ENCODE measurements at regions of chr5 and their contacts with region 1.

Region 1: GRCh38 chr5:153308282-153308681 is 182.2 kb upstream of the GRIA1 start:
- DNase-seq: no peak
- ATAC-seq: no peak
- H3K4me3 ChIP-seq: no peak overlapping the region
- H3K4me3 Mint-ChIP-seq: no peak overlapping the region
- H3K27ac ChIP-seq: no peak overlapping the region
- H3K27ac Mint-ChIP-seq: no peak overlapping the region
- H3K4me1 ChIP-seq: no peaks in the 10 kb centered on the region
- H3K4me1 Mint-ChIP-seq: no peaks in the 10 kb centered on the region
- H3K27me3 ChIP-seq: no peaks in the 10 kb centered on the region
- H3K27me3 Mint-ChIP-seq: no peaks in the 10 kb centered on the region
- CTCF ChIP-seq: no peak

Region 2: DNA sequence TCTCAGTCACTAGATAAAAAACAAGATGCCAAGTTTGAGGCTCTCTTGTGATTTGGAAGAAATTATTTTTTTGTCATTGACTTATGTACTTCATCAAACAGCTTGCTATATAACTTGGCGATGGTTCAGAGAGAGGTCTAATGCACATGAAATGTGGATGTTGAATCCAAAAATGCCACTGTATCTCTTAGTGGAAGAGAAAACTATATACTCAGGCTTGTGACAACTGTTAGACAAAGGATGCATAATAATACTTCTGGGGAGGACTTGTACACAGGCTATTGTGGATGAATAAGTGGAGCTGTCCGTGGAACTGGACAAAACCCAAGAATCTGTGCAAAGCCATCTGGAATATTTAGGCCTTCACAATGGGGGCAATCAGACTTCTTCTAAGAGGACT is 740.3 kb before region 1 on chr5:
- CTCF ChIA-PET with region 1: no interaction called
- POLR2A ChIA-PET with region 1: no interaction called
- intact Hi-C with region 1: no loop called
- DNase-seq: no peak
- ATAC-seq: no peak
- H3K4me3 ChIP-seq: no peak overlapping the region
- H3K4me3 Mint-ChIP-seq: no peak overlapping the region
- H3K27ac ChIP-seq: no peak overlapping the region
- H3K27ac Mint-ChIP-seq: no peak overlapping the region
- H3K4me1 ChIP-seq: no peaks in the 10 kb centered on the region
- H3K4me1 Mint-ChIP-seq: no peaks in the 10 kb centered on the region
- H3K27me3 ChIP-seq: no peaks in the 10 kb centered on the region
- H3K27me3 Mint-ChIP-seq: peaks cover 5% of the 10 kb centered on the region
- CTCF ChIP-seq: no peak

Region 3: DNA sequence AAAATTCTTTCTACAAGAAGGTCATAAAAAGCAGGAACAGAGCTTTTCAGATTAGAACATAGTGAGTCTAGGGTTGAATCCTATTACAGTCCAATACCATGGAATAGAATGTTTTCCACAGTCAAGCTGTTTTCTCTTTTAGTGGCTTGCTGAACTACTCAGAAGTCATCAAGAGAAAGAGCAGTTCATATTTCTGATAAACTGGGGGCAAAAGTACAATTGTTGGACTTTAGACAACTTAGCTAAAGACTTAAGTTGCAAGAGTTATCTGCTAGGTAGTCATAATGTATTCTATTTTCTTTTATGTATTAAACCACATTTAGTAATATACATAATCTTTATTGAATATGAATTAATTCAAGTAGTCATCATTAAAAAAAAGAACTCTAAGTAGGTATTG is 50.9 kb before region 1 on chr5:
- CTCF ChIA-PET with region 1: no interaction called
- POLR2A ChIA-PET with region 1: no interaction called
- intact Hi-C with region 1: no loop called
- DNase-seq: no peak
- ATAC-seq: no peak
- H3K4me3 ChIP-seq: no peak overlapping the region
- H3K4me3 Mint-ChIP-seq: no peak overlapping the region
- H3K27ac ChIP-seq: no peak overlapping the region
- H3K27ac Mint-ChIP-seq: no peak overlapping the region
- H3K4me1 ChIP-seq: no peaks in the 10 kb centered on the region
- H3K4me1 Mint-ChIP-seq: no peaks in the 10 kb centered on the region
- H3K27me3 ChIP-seq: no peaks in the 10 kb centered on the region
- H3K27me3 Mint-ChIP-seq: no peaks in the 10 kb centered on the region
- CTCF ChIP-seq: no peak

Region 4: DNA sequence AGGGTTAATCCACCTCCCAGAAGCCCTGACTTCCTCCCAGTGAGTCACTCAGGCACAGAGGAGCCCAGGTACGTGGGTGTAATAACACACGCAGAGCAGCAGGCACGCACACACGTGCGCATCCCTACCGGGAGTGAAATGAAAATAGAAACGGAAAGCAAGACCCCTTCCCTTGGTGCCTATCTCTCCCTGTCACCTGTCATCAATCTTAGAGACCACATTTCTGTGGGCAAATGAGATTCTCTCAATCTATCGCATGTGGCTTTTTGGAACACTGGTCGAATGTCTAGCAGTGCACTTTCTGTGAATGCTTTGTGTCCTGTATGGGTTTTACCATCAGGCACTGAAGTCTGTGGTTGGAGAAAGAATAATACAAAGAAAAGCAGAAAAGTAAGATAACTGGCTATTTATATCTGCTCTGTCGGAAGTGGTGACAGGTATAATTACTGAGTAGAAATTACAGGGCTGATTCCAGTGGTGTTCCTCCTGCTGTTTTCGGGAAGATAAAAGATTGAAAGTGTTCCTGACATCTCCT is 44.5 kb after region 1 on chr5:
- CTCF ChIA-PET with region 1: no interaction called
- POLR2A ChIA-PET with region 1: no interaction called
- intact Hi-C with region 1: loop called in 1 of 2 experiments (anchors 1 kb)
- DNase-seq: peak in 2 of 14 experiments; percentile 30 to 51
- ATAC-seq: no peak
- H3K4me3 ChIP-seq: no peak overlapping the region
- H3K4me3 Mint-ChIP-seq: no peak overlapping the region
- H3K27ac ChIP-seq: no peak overlapping the region
- H3K27ac Mint-ChIP-seq: no peak overlapping the region
- H3K4me1 ChIP-seq: no peaks in the 10 kb centered on the region
- H3K4me1 Mint-ChIP-seq: no peaks in the 10 kb centered on the region
- H3K27me3 ChIP-seq: no peaks in the 10 kb centered on the region
- H3K27me3 Mint-ChIP-seq: peaks cover 9% of the 10 kb centered on the region
- CTCF ChIP-seq: no peak